ENCODE measurements at regions of chr16 and their contacts with region 1.

Region 1: DNA sequence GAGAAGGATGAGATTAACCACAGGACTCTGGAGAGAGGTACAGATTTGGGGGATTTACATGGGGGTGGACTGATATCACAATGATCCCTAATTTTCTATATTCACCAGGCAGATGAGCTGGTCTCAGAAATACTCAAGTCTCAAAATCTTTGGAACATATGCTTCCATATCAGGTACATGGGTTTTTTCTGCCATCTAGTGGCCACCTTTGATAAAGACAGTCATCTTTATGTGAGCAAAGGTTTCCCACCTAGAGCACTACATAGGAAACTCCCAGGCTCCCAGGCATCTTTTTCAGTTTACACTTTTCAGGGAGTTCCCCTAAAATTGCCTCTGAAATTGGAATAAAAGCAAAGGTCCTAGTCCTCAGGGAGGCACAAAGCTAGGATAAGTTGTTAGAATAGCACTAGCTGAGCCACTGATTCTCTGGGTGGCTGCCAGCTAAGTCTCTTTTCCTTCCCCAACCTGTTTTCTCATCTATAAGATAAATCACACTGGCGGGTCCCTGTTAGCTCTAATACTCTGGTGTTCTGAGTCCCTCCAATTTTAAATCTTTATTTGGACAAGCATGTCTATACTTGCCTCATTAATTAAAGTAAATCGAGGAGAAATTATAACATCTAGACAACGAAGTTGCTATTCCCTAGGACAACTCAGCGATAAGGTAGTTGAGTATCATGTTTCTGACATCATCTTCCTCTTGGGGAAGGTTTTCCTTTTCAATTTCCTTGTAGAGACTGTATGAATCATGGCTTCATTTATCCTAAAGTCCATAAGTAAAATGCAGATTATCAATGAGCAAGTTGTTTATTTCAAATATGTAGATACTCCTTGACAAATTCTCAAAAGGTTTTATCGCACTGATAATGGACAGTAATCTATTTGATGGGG is 19.0 kb upstream of the MON1B start:
- DNase-seq: peak; percentile 76
- H3K4me3 ChIP-seq: peak overlapping the region in 1 of 3 experiments; percentile 12
- H3K27ac ChIP-seq: peak overlapping the region; percentile 36
- H3K4me1 ChIP-seq: peaks cover 17% of the 10 kb centered on the region
- H3K27me3 ChIP-seq: peaks cover 2 to 11% of the 10 kb centered on the region in 2 experiments
- CTCF ChIP-seq: peak; percentile 52 to 59
- POLR2A ChIP-seq: no peak

Region 2: GRCh38 chr16:75647492-75648264 is 1524.3 kb before region 1 on chr16 and contains the starts of genes KARS1 and TERF2IP:
- CTCF ChIA-PET with region 1: interaction called, 8 read pairs
- POLR2A ChIA-PET with region 1: no interaction called
- dilution Hi-C with region 1: no loop called
- intact Hi-C with region 1: loop called (anchors 5 kb)
- DNase-seq: peak; percentile 97
- H3K4me3 ChIP-seq: peak within 1 kb of the TSS; percentile 95 to 98 (median 98)
- H3K27ac ChIP-seq: peak within 1 kb of the TSS; percentile 67
- H3K4me1 ChIP-seq: peaks cover 32% of the 10 kb centered on the region
- H3K27me3 ChIP-seq: no peaks in the 10 kb centered on the region
- CTCF ChIP-seq: no peak
- POLR2A ChIP-seq: peak; percentile 92
- total RNA-seq, gene KARS1: 137 and 146 TPM in 2 replicates
- total RNA-seq, gene TERF2IP: 40.7 and 41.5 TPM in 2 replicates

Region 3: DNA sequence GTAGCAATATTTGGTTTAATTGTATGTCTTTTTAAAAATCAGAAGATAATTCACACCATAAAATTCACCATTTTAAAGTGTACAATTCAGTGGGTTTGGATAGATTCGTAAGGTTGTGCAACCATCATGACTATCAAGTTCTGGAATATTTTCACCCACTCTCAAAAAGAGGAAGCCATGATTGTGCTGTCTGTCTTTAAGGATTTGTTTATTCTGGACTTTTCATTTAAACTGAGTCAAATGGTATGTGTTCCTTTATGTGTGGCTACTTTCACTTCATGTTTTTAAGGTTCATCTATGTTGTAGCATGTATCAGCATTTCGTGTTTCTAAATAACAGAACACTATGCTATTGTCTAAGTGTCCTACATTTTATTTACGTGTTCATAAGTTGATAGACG is 1377.6 kb before region 1 on chr16:
- CTCF ChIA-PET with region 1: interaction called, 85 read pairs
- POLR2A ChIA-PET with region 1: no interaction called
- dilution Hi-C with region 1: no loop called
- intact Hi-C with region 1: loop called (anchors 1 kb)
- DNase-seq: no peak
- H3K4me3 ChIP-seq: no peak overlapping the region
- H3K27ac ChIP-seq: no peak overlapping the region
- H3K4me1 ChIP-seq: no peaks in the 10 kb centered on the region
- H3K27me3 ChIP-seq: no peaks in the 10 kb centered on the region
- CTCF ChIP-seq: no peak
- POLR2A ChIP-seq: no peak

Region 4: GRCh38 chr16:77133706-77134105 is 38.3 kb before region 1 on chr16:
- CTCF ChIA-PET with region 1: no interaction called
- POLR2A ChIA-PET with region 1: no interaction called
- dilution Hi-C with region 1: no loop called
- intact Hi-C with region 1: no loop called
- DNase-seq: no peak
- H3K4me3 ChIP-seq: no peak overlapping the region
- H3K27ac ChIP-seq: no peak overlapping the region
- H3K4me1 ChIP-seq: no peaks in the 10 kb centered on the region
- H3K27me3 ChIP-seq: no peaks in the 10 kb centered on the region
- CTCF ChIP-seq: no peak
- POLR2A ChIP-seq: no peak

Region 5: GRCh38 chr16:77157346-77158058 is 14.5 kb before region 1 on chr16:
- CTCF ChIA-PET with region 1: interaction called, 36 read pairs
- POLR2A ChIA-PET with region 1: no interaction called
- dilution Hi-C with region 1: no loop called
- intact Hi-C with region 1: no loop called
- DNase-seq: no peak
- H3K4me3 ChIP-seq: no peak overlapping the region
- H3K27ac ChIP-seq: no peak overlapping the region
- H3K4me1 ChIP-seq: no peaks in the 10 kb centered on the region
- H3K27me3 ChIP-seq: peaks cover 0 to 1% of the 10 kb centered on the region in 2 experiments
- CTCF ChIP-seq: no peak
- POLR2A ChIP-seq: no peak

Region 6: GRCh38 chr16:77190478-77191258 is 18.7 kb after region 1 on chr16 and contains the start of gene MON1B:
- CTCF ChIA-PET with region 1: interaction called, 6 read pairs
- POLR2A ChIA-PET with region 1: no interaction called
- dilution Hi-C with region 1: no loop called
- intact Hi-C with region 1: loop called (anchors 1 kb)
- DNase-seq: peak; percentile 99
- H3K4me3 ChIP-seq: peak within 1 kb of the TSS; percentile 66 to 91 (median 70)
- H3K27ac ChIP-seq: peak within 1 kb of the TSS; percentile 82
- H3K4me1 ChIP-seq: peaks cover 12% of the 10 kb centered on the region
- H3K27me3 ChIP-seq: peaks cover 2% of the 10 kb centered on the region in 2 experiments
- CTCF ChIP-seq: no peak
- POLR2A ChIP-seq: peak; percentile 74
- total RNA-seq, gene MON1B: 50.1 and 57.0 TPM in 2 replicates

Region 7: DNA sequence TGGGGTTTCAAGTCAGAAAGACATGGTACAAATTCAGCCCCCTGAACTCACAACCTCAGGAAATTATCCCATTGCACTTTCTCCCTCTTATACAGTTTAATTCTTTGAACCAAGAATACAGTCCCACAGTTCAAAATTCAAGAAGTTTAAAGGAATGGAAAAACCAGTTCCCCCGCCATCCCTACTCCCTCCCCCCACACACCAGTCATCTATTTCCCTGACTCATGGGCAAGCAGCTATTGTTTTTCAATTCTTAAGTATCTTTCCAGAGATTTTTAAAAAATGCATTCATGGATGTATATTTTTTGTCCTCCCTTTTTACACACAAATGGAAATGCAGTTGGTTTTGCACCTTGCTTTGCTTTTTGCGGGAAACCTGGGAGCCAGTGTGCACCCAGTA is 34.5 kb after region 1 on chr16:
- CTCF ChIA-PET with region 1: no interaction called
- POLR2A ChIA-PET with region 1: no interaction called
- dilution Hi-C with region 1: no loop called
- intact Hi-C with region 1: no loop called
- DNase-seq: no peak
- H3K4me3 ChIP-seq: no peak overlapping the region
- H3K27ac ChIP-seq: no peak overlapping the region
- H3K4me1 ChIP-seq: no peaks in the 10 kb centered on the region
- H3K27me3 ChIP-seq: no peaks in the 10 kb centered on the region
- CTCF ChIP-seq: no peak
- POLR2A ChIP-seq: no peak

Measured in endothelial cell of umbilical vein (primary cell).